ENCODE measurements at regions of chr6 and their contacts with region 1.

Region 1: DNA sequence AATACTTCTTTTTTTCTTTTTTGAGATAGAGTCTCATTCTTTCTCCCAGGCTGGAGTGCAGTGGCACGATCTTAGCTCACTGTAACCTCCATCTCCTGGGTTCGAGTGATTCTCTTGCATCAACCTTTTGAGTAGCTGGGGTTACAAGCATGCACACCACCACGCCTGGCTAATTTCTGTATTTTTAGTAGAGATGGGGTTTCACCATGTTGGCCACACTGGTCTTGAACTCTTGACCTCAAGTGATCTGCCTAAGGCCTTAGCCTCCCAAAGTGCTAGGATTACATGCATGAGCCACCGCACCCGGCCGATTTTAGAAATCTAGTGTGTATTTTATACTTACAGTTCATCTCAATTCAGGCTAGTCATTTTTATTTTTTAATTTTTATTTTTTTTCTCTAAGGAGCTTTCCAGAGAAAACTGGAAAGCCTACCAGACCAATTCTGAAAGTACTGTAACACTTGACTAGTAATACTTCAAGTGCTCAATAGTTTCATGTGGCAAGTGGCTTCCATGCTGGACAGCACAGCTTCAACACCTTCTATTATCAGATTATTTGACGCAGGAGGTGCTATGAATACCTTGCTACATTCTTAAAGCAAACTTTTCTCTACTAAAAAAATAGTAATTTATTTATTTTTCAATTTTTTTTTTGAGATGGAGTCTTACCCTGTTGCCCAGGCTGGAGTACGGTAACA is 25.0 kb downstream of the POLR1C start:
- DNase-seq: no peak
- H3K4me3 ChIP-seq: no peak overlapping the region
- H3K27ac ChIP-seq: no peak overlapping the region
- H3K27me3 ChIP-seq: no peaks in the 10 kb centered on the region
- CTCF ChIP-seq: no peak

Region 2: GRCh38 chr6:43402820-43403219 is 139.1 kb before region 1 on chr6:
- CTCF ChIA-PET with region 1: interaction called, 12 read pairs
- POLR2A ChIA-PET with region 1: no interaction called
- DNase-seq: no peak
- H3K4me3 ChIP-seq: no peak overlapping the region
- H3K27ac ChIP-seq: no peak overlapping the region
- H3K27me3 ChIP-seq: peaks cover 4% of the 10 kb centered on the region
- CTCF ChIP-seq: peak; percentile 23

Region 3: GRCh38 chr6:43468748-43469681 is 72.9 kb before region 1 on chr6:
- CTCF ChIA-PET with region 1: no interaction called
- POLR2A ChIA-PET with region 1: no interaction called
- DNase-seq: no peak
- H3K4me3 ChIP-seq: no peak overlapping the region
- H3K27ac ChIP-seq: no peak overlapping the region
- H3K27me3 ChIP-seq: peaks cover 2% of the 10 kb centered on the region
- CTCF ChIP-seq: no peak

Region 4: GRCh38 chr6:43883847-43884651 is 342.1 kb after region 1 on chr6:
- CTCF ChIA-PET with region 1: no interaction called
- POLR2A ChIA-PET with region 1: no interaction called
- DNase-seq: no peak
- H3K4me3 ChIP-seq: no peak overlapping the region
- H3K27ac ChIP-seq: no peak overlapping the region
- H3K27me3 ChIP-seq: peaks cover 16% of the 10 kb centered on the region
- CTCF ChIP-seq: no peak